Naive thymus-derived CD4-positive, alpha-beta T cell (primary cell): ENCODE measurements at regions of chr11 and their contacts with region 1.

Region 1: DNA sequence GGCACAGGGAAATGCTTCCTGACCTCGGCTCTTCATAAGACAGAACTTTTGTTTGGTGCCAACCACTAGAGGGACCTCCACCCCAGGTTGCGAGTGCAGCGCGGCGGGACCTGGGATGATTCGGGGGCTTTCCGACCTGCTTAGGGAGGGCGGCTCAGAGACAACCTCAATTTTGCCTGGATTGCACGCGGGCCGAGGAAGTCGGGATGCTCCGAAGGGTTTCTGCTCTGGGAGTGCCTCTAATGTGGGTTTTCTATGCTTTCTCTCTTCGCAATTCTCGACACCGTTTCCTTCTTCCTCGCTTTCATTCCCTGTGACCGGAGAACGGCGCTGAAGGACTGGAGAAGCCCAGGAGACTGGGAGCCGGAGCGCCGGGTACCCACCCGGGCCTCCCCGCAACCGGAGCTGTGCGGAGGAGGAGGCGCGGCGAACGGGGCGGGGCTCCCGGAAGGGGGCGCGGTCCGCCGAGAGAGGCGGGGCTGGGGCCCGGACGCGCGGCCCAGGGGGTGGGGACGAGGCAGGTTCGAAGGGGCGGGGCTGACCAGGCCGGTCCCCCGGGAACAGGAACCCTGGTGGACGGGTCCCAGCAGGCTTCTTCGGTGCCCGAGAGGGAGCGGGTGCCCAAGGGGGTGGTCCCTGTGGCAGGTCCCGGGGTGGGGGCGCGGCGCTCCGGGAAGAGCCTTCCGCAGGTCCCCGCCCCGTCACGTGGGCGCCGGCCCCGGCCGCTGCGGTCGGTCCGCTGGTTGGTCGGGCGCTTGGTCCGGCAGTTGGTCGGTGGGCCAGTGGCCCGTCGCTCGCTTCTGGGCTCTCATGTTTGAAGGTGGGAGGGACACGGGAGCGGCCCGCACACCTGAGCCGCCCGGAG is at the start of gene PPFIBP2:
- DNase-seq: peak; percentile 75 to 92 (median 85)
- ATAC-seq: peak; percentile 93
- H3K4me3 ChIP-seq: peak within 1 kb of the TSS; percentile 94
- H3K4me3 Mint-ChIP-seq: peak within 1 kb of the TSS; percentile 92 to 98 (median 95)
- H3K27ac ChIP-seq: peak within 1 kb of the TSS; percentile 91
- H3K27ac Mint-ChIP-seq: peak within 1 kb of the TSS in 8 of 9 donors; percentile 86 to 98 (median 96)
- H3K4me1 ChIP-seq: peaks cover 4 to 39% of the 10 kb centered on the region in 2 donors
- H3K4me1 Mint-ChIP-seq: peaks cover 11 to 65% (median 52%) of the 10 kb centered on the region in 7 donors
- H3K27me3 ChIP-seq: no peaks in the 10 kb centered on the region
- H3K27me3 Mint-ChIP-seq: peaks cover 0 to 23% (median 0%) of the 10 kb centered on the region in 5 donors
- total RNA-seq, gene PPFIBP2: 5.7 to 55.6 (median 45.9) TPM

Region 2: GRCh38 chr11:6481012-6481923 is 1032.2 kb before region 1 on chr11 and contains the starts of genes ARFIP2 and TIMM10B:
- CTCF ChIA-PET with region 1: no interaction called
- POLR2A ChIA-PET with region 1: no interaction called
- intact Hi-C with region 1: loop called in 1 of 2 experiments (anchors 2 kb)
- DNase-seq: peak; percentile 83 to 98 (median 94)
- ATAC-seq: peak; percentile 98
- H3K4me3 ChIP-seq: peak within 1 kb of the TSS; percentile 74
- H3K4me3 Mint-ChIP-seq: peak within 1 kb of the TSS; percentile 87 to 99 (median 97)
- H3K27ac ChIP-seq: peak within 1 kb of the TSS; percentile 86
- H3K27ac Mint-ChIP-seq: peak within 1 kb of the TSS; percentile 93 to 99 (median 98)
- H3K4me1 ChIP-seq: peaks cover 22 to 24% of the 10 kb centered on the region in 2 donors
- H3K4me1 Mint-ChIP-seq: peaks cover 29 to 48% (median 43%) of the 10 kb centered on the region in 7 donors
- H3K27me3 ChIP-seq: no peaks in the 10 kb centered on the region
- H3K27me3 Mint-ChIP-seq: no peaks in the 10 kb centered on the region
- total RNA-seq, gene ARFIP2: 48.6 to 63.4 (median 53.8) TPM
- total RNA-seq, gene TIMM10B: 39.3 to 68.4 (median 59.2) TPM

Region 3: GRCh38 chr11:7527029-7527428 is 13.6 kb after region 1 on chr11:
- CTCF ChIA-PET with region 1: interaction called, 7 read pairs
- POLR2A ChIA-PET with region 1: interaction called, 45 read pairs
- intact Hi-C with region 1: loop called in 1 of 2 experiments (anchors 1 kb)
- DNase-seq: peak in 8 of 9 donors; percentile 18 to 81 (median 68)
- ATAC-seq: peak; percentile 95
- H3K4me3 ChIP-seq: peak overlapping the region; percentile 1
- H3K4me3 Mint-ChIP-seq: peak overlapping the region; percentile 54 to 89 (median 76)
- H3K27ac ChIP-seq: no peak overlapping the region
- H3K27ac Mint-ChIP-seq: peak overlapping the region; percentile 19 to 93 (median 82)
- H3K4me1 ChIP-seq: peaks cover 29 to 83% of the 10 kb centered on the region in 2 donors
- H3K4me1 Mint-ChIP-seq: peaks cover 2 to 76% (median 52%) of the 10 kb centered on the region in 7 donors
- H3K27me3 ChIP-seq: no peaks in the 10 kb centered on the region
- H3K27me3 Mint-ChIP-seq: peaks cover 0 to 6% (median 0%) of the 10 kb centered on the region in 5 donors

Region 4: DNA sequence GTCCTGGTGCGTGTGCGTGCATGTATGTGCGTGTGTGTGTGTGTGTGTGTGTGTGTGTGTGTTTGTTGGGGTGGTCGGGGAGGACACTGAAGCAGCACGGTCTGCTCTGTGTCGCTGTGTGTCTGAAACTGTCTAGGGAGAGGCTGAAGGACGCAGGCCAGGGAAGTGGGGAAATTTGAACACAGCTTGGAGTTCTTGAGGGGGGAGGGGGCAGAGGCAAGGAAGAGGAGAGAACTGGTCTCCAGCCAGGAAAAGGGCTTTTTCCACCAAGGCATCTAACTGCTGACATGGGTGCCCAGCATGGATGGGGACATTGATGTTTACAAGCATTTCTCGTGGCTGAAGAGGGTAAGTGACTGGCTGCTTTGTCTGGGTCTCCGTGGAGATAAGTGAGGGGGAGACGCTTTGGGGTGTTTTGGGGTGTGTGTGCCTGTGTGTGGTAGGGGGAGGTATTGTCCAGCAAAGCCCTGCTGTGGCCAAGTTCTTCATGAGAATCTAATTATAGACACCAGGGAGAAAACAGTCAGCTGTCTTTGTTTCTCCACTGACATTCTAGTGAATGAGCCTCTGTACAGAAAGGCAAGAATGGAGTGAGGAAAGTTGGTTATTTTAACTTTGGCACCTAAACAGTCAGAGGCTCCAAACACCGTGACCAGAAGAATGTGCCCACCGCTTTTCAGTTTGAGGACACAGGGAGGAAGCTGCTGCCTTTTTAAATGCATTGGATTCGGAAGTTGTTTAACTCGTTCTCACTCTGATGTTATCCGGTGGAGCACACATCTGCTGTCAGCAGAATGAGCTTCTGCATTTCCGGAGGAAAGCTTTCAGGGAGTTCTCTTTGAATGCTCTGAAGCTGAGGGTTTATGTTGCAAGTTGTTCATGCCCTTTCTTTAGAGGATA is 64.1 kb after region 1 on chr11:
- CTCF ChIA-PET with region 1: interaction called, 3 read pairs
- POLR2A ChIA-PET with region 1: no interaction called
- intact Hi-C with region 1: loop called (anchors 1 to 5 kb)
- DNase-seq: peak in 5 of 9 donors; percentile 14 to 31 (median 25)
- ATAC-seq: peak; percentile 58
- H3K4me3 ChIP-seq: no peak overlapping the region
- H3K4me3 Mint-ChIP-seq: peak overlapping the region; percentile 51 to 80 (median 68)
- H3K27ac ChIP-seq: no peak overlapping the region
- H3K27ac Mint-ChIP-seq: peak overlapping the region in 6 of 9 donors; percentile 2 to 36 (median 24)
- H3K4me1 ChIP-seq: peaks cover 0 to 28% of the 10 kb centered on the region in 2 donors
- H3K4me1 Mint-ChIP-seq: peaks cover 29 to 50% (median 46%) of the 10 kb centered on the region in 7 donors
- H3K27me3 ChIP-seq: peaks cover 0 to 6% of the 10 kb centered on the region in 2 donors
- H3K27me3 Mint-ChIP-seq: peaks cover 0 to 50% (median 0%) of the 10 kb centered on the region in 5 donors

Region 5: GRCh38 chr11:7657306-7658025 is 144.0 kb after region 1 on chr11:
- CTCF ChIA-PET with region 1: no interaction called
- POLR2A ChIA-PET with region 1: no interaction called
- intact Hi-C with region 1: loop called in 1 of 2 experiments (anchors 1 kb)
- DNase-seq: peak in 1 of 9 donors; percentile 23
- ATAC-seq: peak; percentile 66
- H3K4me3 ChIP-seq: no peak overlapping the region
- H3K4me3 Mint-ChIP-seq: no peak overlapping the region
- H3K27ac ChIP-seq: no peak overlapping the region
- H3K27ac Mint-ChIP-seq: peak overlapping the region in 2 of 9 donors; percentile 22 to 38
- H3K4me1 ChIP-seq: no peaks in the 10 kb centered on the region
- H3K4me1 Mint-ChIP-seq: no peaks in the 10 kb centered on the region
- H3K27me3 ChIP-seq: no peaks in the 10 kb centered on the region
- H3K27me3 Mint-ChIP-seq: no peaks in the 10 kb centered on the region

Region 6: GRCh38 chr11:7694235-7694634 is 180.8 kb after region 1 on chr11:
- CTCF ChIA-PET with region 1: interaction called, 7 read pairs
- POLR2A ChIA-PET with region 1: no interaction called
- intact Hi-C with region 1: loop called in 1 of 2 experiments (anchors 1 kb)
- DNase-seq: no peak
- ATAC-seq: no peak
- H3K4me3 ChIP-seq: no peak overlapping the region
- H3K4me3 Mint-ChIP-seq: no peak overlapping the region
- H3K27ac ChIP-seq: no peak overlapping the region
- H3K27ac Mint-ChIP-seq: no peak overlapping the region
- H3K4me1 ChIP-seq: no peaks in the 10 kb centered on the region
- H3K4me1 Mint-ChIP-seq: no peaks in the 10 kb centered on the region
- H3K27me3 ChIP-seq: peaks cover 6 to 11% of the 10 kb centered on the region in 2 donors
- H3K27me3 Mint-ChIP-seq: peaks cover 28 to 55% (median 32%) of the 10 kb centered on the region in 5 donors